Activated CD4-positive, alpha-beta T cell treated with anti-CD3 and anti-CD28 coated beads for 36 hours (primary cell): ENCODE measurements at regions of chr12 and their contacts with region 1.

Region 1: GRCh38 chr12:59403259-59403932 is 192.4 kb upstream of the SLC16A7 start:
- DNase-seq: peak; percentile 41
- ATAC-seq: peak; percentile 50
- H3K4me3 Mint-ChIP-seq: no peak overlapping the region
- H3K27ac Mint-ChIP-seq: no peak overlapping the region
- H3K4me1 Mint-ChIP-seq: peaks cover 9% of the 10 kb centered on the region
- H3K27me3 Mint-ChIP-seq: peaks cover 2% of the 10 kb centered on the region

Region 2: GRCh38 chr12:59298296-59298695 is 105.1 kb before region 1 on chr12:
- CTCF ChIA-PET with region 1: no interaction called
- POLR2A ChIA-PET with region 1: no interaction called
- intact Hi-C with region 1: no loop called
- DNase-seq: no peak
- ATAC-seq: no peak
- H3K4me3 Mint-ChIP-seq: no peak overlapping the region
- H3K27ac Mint-ChIP-seq: no peak overlapping the region
- H3K4me1 Mint-ChIP-seq: no peaks in the 10 kb centered on the region
- H3K27me3 Mint-ChIP-seq: no peaks in the 10 kb centered on the region

Region 3: DNA sequence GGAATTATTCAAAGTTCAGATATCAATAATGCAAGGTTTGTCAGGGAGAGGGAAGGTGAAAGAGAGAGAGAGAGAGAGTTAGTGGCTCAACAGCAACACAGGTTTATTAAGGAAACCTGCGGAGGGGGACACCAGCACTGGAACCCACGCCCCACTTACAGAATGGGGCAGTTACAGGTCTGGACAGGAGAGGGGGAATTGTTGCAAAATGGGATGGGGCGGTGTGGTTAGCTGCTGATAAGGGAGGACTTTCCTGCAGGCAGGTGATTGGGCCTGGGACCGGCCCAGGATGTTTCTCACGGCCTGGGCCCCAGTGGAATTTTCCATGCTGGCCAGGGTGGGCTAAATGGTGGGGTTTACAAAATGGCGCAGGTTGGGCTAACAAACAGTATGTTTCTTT is 85.8 kb before region 1 on chr12:
- CTCF ChIA-PET with region 1: no interaction called
- POLR2A ChIA-PET with region 1: no interaction called
- intact Hi-C with region 1: no loop called
- DNase-seq: no peak
- ATAC-seq: no peak
- H3K4me3 Mint-ChIP-seq: no peak overlapping the region
- H3K27ac Mint-ChIP-seq: no peak overlapping the region
- H3K4me1 Mint-ChIP-seq: no peaks in the 10 kb centered on the region
- H3K27me3 Mint-ChIP-seq: no peaks in the 10 kb centered on the region

Region 4: GRCh38 chr12:59636945-59637691 is 233.7 kb after region 1 on chr12:
- CTCF ChIA-PET with region 1: no interaction called
- POLR2A ChIA-PET with region 1: no interaction called
- intact Hi-C with region 1: no loop called
- DNase-seq: no peak
- ATAC-seq: peak; percentile 60
- H3K4me3 Mint-ChIP-seq: no peak overlapping the region
- H3K27ac Mint-ChIP-seq: no peak overlapping the region
- H3K4me1 Mint-ChIP-seq: peaks cover 42% of the 10 kb centered on the region
- H3K27me3 Mint-ChIP-seq: no peaks in the 10 kb centered on the region

Region 5: DNA sequence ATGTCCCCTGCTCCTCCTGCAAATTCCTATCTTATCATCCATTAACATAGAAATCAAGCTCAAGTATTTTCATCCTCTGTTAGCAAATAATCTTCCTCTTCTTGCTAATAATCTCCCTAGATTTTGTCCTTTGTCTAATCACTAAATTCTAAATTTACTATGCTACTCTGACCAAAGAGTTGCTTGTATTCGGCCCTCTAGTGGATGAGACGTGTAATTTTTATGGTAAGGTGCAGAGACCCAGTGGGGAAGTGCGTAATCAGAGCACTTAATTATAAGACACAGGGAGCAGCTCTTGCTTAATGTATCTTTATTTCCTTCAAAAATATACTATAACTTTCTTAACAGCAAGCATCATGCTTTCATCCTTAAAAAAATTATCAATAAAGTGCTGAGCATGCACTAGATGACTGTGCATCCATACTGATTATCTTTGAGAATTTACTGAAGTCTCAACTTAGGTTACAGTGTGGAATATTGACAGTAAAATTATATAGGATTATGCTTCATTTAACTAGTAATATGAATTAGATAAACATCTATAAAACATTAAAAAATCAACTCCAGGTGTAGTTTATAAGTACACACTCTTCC is 405.0 kb after region 1 on chr12:
- CTCF ChIA-PET with region 1: interaction called, 8 read pairs
- POLR2A ChIA-PET with region 1: no interaction called
- intact Hi-C with region 1: loop called (anchors 1 kb)
- DNase-seq: no peak
- ATAC-seq: peak; percentile 70
- H3K4me3 Mint-ChIP-seq: no peak overlapping the region
- H3K27ac Mint-ChIP-seq: no peak overlapping the region
- H3K4me1 Mint-ChIP-seq: no peaks in the 10 kb centered on the region
- H3K27me3 Mint-ChIP-seq: no peaks in the 10 kb centered on the region

Region 6: DNA sequence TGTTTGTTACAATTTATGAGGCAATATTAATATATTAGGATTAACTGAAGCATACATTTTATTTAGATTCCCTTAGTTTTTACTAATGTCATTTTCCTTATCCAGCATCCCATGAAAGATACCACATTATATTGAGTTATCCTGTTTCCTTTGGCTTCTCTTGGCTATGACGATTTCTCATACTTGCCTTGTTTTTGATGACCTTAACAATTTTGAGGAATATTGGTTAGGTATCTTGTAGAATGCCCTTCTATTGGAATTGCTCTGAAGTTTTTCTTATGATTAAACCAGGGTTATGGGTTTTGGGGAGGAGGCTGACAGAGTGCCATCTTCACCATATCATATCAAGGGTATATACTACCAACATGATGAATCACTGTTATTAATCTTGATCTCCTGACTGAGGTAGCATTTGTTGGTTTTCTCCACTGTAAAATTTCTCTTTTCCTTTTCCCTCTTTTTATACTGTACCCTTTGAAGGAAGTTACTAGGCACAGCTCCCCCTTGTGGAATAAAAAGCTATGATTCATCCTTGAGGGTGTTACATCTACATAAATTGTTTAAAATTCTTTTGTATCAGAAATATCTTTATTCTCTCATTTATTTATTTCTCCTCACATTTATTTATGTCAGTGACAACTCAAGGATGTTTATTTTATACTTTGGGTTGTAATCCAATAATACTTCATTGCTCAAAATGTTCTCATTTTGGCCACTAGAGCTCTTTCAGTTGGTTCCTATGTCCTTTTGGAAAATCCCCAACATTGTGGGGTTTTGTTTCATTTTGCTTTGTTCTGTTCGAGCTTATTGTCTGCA is 431.5 kb after region 1 on chr12:
- CTCF ChIA-PET with region 1: interaction called, 8 read pairs
- POLR2A ChIA-PET with region 1: no interaction called
- intact Hi-C with region 1: loop called (anchors 1 kb)
- DNase-seq: no peak
- ATAC-seq: no peak
- H3K4me3 Mint-ChIP-seq: no peak overlapping the region
- H3K27ac Mint-ChIP-seq: no peak overlapping the region
- H3K4me1 Mint-ChIP-seq: no peaks in the 10 kb centered on the region
- H3K27me3 Mint-ChIP-seq: peaks cover 4% of the 10 kb centered on the region

Region 7: GRCh38 chr12:60494244-60494643 is 1090.8 kb after region 1 on chr12:
- CTCF ChIA-PET with region 1: no interaction called
- POLR2A ChIA-PET with region 1: no interaction called
- intact Hi-C with region 1: loop called in 1 of 2 experiments (anchors 1 kb)
- DNase-seq: no peak
- ATAC-seq: no peak
- H3K4me3 Mint-ChIP-seq: no peak overlapping the region
- H3K27ac Mint-ChIP-seq: no peak overlapping the region
- H3K4me1 Mint-ChIP-seq: no peaks in the 10 kb centered on the region
- H3K27me3 Mint-ChIP-seq: no peaks in the 10 kb centered on the region